Ascending aorta (tissue), 2 donors: ENCODE measurements at regions of chr19 and their contacts with region 1.

Region 1: GRCh38 chr19:2475702-2476450 is at the start of gene GADD45B:
- DNase-seq: peak; percentile 89 to 99
- H3K4me3 ChIP-seq: peak within 1 kb of the TSS; percentile 94 to 98
- H3K27ac ChIP-seq: peak within 1 kb of the TSS; percentile 88 to 95
- H3K4me1 ChIP-seq: peaks cover 3 to 16% of the 10 kb centered on the region in 2 donors
- H3K27me3 ChIP-seq: no peaks in the 10 kb centered on the region
- CTCF ChIP-seq: peak in 1 of 3 experiments; percentile 19
- total RNA-seq, gene GADD45B: 514 TPM

Region 2: DNA sequence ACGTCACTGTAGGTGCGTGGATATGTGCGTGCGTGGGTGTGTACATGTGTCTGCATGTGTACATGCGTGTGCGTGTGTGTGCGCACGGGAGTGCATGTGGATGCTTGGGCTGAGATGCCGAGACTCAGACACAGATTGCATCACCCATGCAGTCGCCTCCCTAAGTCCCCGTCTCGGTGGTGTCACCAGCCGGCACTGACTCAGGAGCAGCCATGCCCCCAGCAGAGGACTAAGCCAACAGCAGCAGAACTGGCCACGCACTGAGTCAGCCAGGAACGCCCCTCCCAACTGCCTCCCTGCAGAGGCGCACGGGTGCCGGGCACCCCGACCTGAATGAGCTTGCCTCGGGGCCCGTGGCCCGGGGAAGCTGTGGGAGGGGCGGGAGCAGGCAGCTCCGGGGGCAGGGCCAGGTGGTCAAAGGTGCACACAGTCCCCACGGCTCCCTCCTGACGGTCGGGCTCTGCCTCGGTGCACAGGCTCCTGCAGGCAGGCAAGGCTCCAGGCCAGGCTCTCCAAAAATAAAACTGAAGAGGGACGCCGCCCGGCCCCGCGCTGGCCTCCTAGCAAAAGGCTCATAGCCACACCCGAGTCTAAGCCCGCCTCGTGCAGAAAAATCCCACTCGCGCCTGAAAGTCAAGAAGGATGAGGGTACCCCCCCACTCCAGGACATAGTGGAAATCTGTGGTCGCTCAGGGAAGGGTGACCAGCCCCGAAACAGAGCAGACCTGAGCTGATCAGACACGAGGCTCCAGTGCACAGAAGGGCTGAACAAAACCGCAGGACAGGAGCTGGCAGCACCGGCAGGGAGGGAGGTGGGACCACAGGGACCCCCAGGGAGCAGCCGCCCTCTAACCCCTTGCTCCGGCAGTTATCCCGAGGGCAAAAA is 49.2 kb after region 1 on chr19:
- intact Hi-C with region 1: loop called (anchors 2 kb)
- DNase-seq: peak; percentile 65 to 86
- H3K4me3 ChIP-seq: peak overlapping the region; percentile 28 to 55
- H3K27ac ChIP-seq: peak overlapping the region; percentile 63 to 76
- H3K4me1 ChIP-seq: peaks cover 7 to 21% of the 10 kb centered on the region in 2 donors
- H3K27me3 ChIP-seq: no peaks in the 10 kb centered on the region
- CTCF ChIP-seq: no peak

Region 3: DNA sequence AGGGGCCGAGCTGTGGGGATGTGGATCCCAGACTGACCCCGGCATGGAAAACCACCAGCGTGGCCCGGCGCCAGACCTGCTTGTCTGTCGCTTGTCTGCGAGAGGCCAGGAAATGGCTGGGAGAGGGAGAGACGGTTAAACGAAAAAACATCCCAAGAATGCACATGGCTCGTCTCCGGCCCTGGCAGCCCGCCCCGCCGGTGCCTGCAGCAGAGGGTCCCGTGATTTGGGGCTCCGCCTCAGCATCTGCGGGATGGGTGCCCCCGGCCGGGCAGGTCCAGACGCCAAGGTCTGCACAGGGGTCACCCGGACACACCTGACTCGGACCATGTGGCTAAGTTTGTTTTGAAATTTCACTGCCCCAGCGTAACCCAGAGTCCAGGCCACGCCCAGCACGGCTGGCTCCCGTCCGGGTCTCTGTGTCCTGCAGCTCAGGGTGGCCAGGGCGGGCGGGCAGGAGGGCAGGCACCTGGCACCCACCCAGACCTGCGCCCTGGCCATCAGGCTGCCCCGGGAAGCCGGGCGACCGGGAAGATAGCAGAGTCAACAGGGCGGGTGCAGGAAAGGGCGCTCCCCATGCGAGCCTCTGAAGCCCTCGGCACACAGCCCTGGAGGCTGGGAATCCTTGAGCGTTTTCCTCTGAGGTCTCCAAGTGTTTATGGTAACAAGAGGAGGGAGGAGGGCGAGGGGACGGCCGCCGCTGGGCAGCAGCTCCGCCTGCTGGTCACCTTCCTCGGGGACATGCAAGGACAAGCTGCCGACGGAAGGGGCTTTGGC is 103.2 kb after region 1 on chr19:
- intact Hi-C with region 1: loop called (anchors 1 kb)
- DNase-seq: peak; percentile 75 to 96
- H3K4me3 ChIP-seq: peak overlapping the region; percentile 50 to 60
- H3K27ac ChIP-seq: peak overlapping the region; percentile 84 to 90
- H3K4me1 ChIP-seq: peaks cover 13 to 40% of the 10 kb centered on the region in 2 donors
- H3K27me3 ChIP-seq: no peaks in the 10 kb centered on the region
- CTCF ChIP-seq: peak; percentile 89 to 98 (median 97)

Region 4: GRCh38 chr19:2610637-2611482 is 135.0 kb after region 1 on chr19:
- intact Hi-C with region 1: loop called (anchors 1 kb)
- DNase-seq: peak; percentile 80 to 97
- H3K4me3 ChIP-seq: peak overlapping the region; percentile 51 to 61
- H3K27ac ChIP-seq: peak overlapping the region; percentile 92 to 94
- H3K4me1 ChIP-seq: peaks cover 0 to 9% of the 10 kb centered on the region in 2 donors
- H3K27me3 ChIP-seq: no peaks in the 10 kb centered on the region
- CTCF ChIP-seq: peak; percentile 93 to 99 (median 94)

Region 5: GRCh38 chr19:2636897-2637683 is 161.2 kb after region 1 on chr19:
- intact Hi-C with region 1: loop called (anchors 1 kb)
- DNase-seq: no peak
- H3K4me3 ChIP-seq: peak overlapping the region in 1 of 2 donors; percentile 32
- H3K27ac ChIP-seq: no peak overlapping the region
- H3K4me1 ChIP-seq: peaks cover 15 to 23% of the 10 kb centered on the region in 2 donors
- H3K27me3 ChIP-seq: no peaks in the 10 kb centered on the region
- CTCF ChIP-seq: peak; percentile 87 to 98 (median 94)

Region 6: DNA sequence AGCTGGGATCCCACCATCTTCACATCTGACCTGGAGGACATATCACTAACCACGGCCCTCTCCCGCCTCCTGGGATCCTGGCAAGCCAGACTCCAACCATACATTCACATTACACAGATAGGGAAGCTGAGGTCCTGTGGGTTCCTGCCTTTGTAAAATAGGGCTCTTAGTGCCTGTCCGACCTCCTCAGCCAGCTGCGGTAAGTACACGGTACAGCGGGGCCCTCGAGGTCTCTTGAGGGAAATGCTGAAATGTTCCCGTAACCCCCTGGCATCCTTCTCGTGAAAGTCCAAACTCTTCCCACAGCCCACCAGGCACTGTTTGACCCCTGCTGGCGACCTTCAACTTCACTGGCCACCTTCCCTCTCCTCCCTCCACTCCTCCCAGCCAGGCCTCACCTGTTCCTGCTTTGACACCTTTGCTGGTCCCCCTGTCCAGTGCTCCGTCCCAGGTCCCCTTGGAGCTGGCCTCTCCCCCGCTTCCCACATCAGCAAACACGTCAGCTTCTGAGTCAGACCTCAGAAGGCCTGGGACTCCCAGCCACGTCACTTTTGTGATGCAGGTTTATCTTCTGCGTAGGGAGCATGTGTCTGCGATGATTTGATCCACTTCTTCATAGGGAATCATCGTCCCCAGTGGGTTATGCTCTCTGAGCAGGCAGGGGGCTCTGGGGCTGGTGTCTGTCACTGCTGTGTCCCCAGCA is 235.4 kb after region 1 on chr19:
- intact Hi-C with region 1: no loop called
- DNase-seq: no peak
- H3K4me3 ChIP-seq: no peak overlapping the region
- H3K27ac ChIP-seq: no peak overlapping the region
- H3K4me1 ChIP-seq: no peaks in the 10 kb centered on the region
- H3K27me3 ChIP-seq: no peaks in the 10 kb centered on the region
- CTCF ChIP-seq: no peak